ENCODE measurements at regions of chr12 and their contacts with region 1.

Region 1: DNA sequence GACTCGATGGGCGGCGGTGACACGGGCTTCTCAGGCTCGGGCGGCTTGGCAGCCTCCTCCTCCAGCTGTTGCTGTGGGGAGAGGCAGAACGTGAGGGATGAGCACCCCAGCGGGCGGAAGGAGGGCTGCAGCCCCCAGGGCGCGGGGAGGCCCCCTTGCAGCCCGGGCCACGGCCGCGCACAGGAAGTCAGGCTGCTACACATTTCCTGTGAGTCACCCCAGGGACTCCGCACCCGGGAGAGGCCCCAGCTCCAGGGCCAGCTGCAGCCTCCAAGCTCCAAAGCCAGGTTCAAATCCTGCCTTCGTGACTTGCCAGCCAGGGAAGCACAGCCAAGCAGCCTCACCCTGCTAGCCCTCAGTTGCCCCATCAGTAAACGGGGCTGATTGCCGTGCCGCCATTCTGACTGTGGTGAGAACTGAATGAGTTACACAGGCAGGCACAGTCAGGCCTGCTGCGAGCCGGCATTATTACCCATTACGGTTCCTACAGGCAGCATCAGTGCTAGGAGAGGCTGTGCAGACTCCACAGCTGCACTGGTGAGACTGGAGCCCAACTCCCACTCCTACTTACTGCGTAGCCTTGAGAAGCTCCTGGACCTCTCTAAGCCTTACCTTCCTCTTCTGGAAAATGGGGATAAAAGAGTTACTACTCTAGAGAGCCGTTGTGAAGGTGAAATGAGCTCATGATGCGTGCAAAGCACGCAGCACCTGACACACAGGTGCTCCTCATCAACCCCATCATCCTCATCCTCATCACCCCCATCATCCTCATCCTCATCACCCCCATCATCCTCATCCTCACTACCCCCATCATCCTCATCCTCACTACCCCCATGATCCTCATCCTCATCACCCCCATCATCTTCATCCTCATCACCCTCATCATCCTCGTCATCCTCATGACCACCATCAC is 100.9 kb downstream of the NCOR2 start:
- DNase-seq: peak; percentile 94
- ATAC-seq: peak; percentile 99
- H3K4me3 Mint-ChIP-seq: peak overlapping the region; percentile 61
- H3K27ac Mint-ChIP-seq: peak overlapping the region; percentile 74
- H3K4me1 Mint-ChIP-seq: peaks cover 34% of the 10 kb centered on the region
- H3K27me3 Mint-ChIP-seq: no peaks in the 10 kb centered on the region

Region 2: GRCh38 chr12:124388679-124389536 is 77.6 kb before region 1 on chr12:
- CTCF ChIA-PET with region 1: no interaction called
- POLR2A ChIA-PET with region 1: no interaction called
- intact Hi-C with region 1: loop called in 1 of 2 experiments (anchors 1 kb)
- DNase-seq: peak; percentile 86
- ATAC-seq: peak; percentile 79
- H3K4me3 Mint-ChIP-seq: peak overlapping the region; percentile 44
- H3K27ac Mint-ChIP-seq: no peak overlapping the region
- H3K4me1 Mint-ChIP-seq: peaks cover 43% of the 10 kb centered on the region
- H3K27me3 Mint-ChIP-seq: no peaks in the 10 kb centered on the region

Region 3: GRCh38 chr12:124493809-124494750 is 27.6 kb after region 1 on chr12:
- CTCF ChIA-PET with region 1: interaction called, 4 read pairs
- POLR2A ChIA-PET with region 1: no interaction called
- intact Hi-C with region 1: loop called in 1 of 2 experiments (anchors 1 kb)
- DNase-seq: peak; percentile 84
- ATAC-seq: peak; percentile 96
- H3K4me3 Mint-ChIP-seq: peak overlapping the region; percentile 25
- H3K27ac Mint-ChIP-seq: peak overlapping the region; percentile 91
- H3K4me1 Mint-ChIP-seq: peaks cover 48% of the 10 kb centered on the region
- H3K27me3 Mint-ChIP-seq: no peaks in the 10 kb centered on the region

Region 4: GRCh38 chr12:124567661-124568373 is 101.3 kb after region 1 on chr12:
- CTCF ChIA-PET with region 1: no interaction called
- POLR2A ChIA-PET with region 1: interaction called, 7 read pairs
- intact Hi-C with region 1: loop called in 1 of 2 experiments (anchors 1 kb)
- DNase-seq: peak; percentile 89
- ATAC-seq: peak; percentile 72
- H3K4me3 Mint-ChIP-seq: peak overlapping the region; percentile 75
- H3K27ac Mint-ChIP-seq: peak overlapping the region; percentile 89
- H3K4me1 Mint-ChIP-seq: peaks cover 33% of the 10 kb centered on the region
- H3K27me3 Mint-ChIP-seq: no peaks in the 10 kb centered on the region

Region 5: GRCh38 chr12:124713436-124714082 is 247.1 kb after region 1 on chr12:
- CTCF ChIA-PET with region 1: no interaction called
- POLR2A ChIA-PET with region 1: no interaction called
- intact Hi-C with region 1: loop called in 1 of 2 experiments (anchors 5 kb)
- DNase-seq: peak; percentile 74
- ATAC-seq: peak; percentile 96
- H3K4me3 Mint-ChIP-seq: peak overlapping the region; percentile 58
- H3K27ac Mint-ChIP-seq: peak overlapping the region; percentile 81
- H3K4me1 Mint-ChIP-seq: peaks cover 22% of the 10 kb centered on the region
- H3K27me3 Mint-ChIP-seq: peaks cover 2% of the 10 kb centered on the region